CD14-positive monocyte (primary cell): ENCODE measurements at regions of chr11 and their contacts with region 1.

Region 1: DNA sequence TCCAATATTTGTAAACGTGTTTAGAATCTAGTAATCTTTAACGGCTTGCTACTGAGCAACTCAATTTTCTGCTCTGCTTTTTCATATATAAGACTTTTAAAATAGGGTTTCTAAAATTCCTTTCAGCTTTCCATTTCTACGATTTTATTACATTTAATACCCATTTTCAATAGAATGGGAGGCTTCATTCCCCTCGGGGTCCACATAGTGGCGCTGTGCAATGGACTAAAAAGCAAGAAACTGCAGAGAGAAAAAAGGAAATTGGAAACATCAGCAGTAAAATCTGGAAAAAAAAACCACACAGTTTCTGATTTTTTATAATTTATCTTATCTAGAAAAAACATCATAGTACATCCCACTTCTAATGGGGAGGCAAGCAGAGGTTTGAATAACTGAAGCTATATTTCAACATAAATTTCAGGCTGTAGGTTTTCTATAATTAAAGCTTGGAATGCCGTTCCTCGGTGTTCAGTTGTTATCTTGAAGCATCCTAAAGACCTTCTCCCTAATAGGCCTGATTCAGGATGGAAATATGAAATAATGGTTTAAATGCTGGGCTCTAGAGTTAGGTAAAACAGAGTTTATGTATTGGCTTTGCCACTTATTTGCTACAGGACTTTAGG is 18.7 kb upstream of the JHY start:
- DNase-seq: peak; percentile 40 to 63 (median 60)
- H3K4me3 ChIP-seq: peak overlapping the region; percentile 44 to 96 (median 70)
- H3K4me3 Mint-ChIP-seq: peak overlapping the region; percentile 68 to 92
- H3K27ac ChIP-seq: peak overlapping the region in 1 of 2 donors; percentile 91
- H3K27ac Mint-ChIP-seq: peak overlapping the region; percentile 92 to 99 (median 97)
- H3K4me1 ChIP-seq: peaks cover 15 to 23% of the 10 kb centered on the region in 2 donors
- H3K4me1 Mint-ChIP-seq: peaks cover 21% of the 10 kb centered on the region
- H3K27me3 ChIP-seq: peaks cover 0 to 2% of the 10 kb centered on the region in 2 donors
- H3K27me3 Mint-ChIP-seq: peaks cover 6 to 9% (median 6%) of the 10 kb centered on the region in 3 donors
- CTCF ChIP-seq: peak; percentile 92

Region 2: DNA sequence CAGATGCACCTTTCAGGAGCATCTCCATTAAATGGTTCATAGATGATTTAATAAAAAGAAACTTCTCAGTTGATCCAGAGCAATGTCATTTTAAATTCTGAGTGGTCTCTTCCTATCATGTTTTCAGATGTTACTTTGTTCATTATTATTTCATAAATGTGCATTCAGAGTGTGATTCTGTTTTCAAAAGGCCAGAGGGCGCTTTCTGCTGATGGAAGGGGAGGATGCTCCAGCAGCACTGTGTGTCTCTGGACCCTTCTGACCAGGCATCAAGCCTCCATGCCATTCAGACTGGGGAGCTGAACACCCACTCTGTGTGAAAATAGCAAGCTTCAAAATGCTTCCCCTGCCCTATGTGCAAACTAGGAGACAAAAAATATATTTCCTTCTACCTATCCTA is 49.4 kb before region 1 on chr11:
- intact Hi-C with region 1: no loop called
- DNase-seq: no peak
- H3K4me3 ChIP-seq: no peak overlapping the region
- H3K4me3 Mint-ChIP-seq: no peak overlapping the region
- H3K27ac ChIP-seq: no peak overlapping the region
- H3K27ac Mint-ChIP-seq: no peak overlapping the region
- H3K4me1 ChIP-seq: no peaks in the 10 kb centered on the region
- H3K4me1 Mint-ChIP-seq: peaks cover 4% of the 10 kb centered on the region
- H3K27me3 ChIP-seq: no peaks in the 10 kb centered on the region
- H3K27me3 Mint-ChIP-seq: peaks cover 0 to 1% (median 0%) of the 10 kb centered on the region in 3 donors
- CTCF ChIP-seq: no peak

Region 3: GRCh38 chr11:122832721-122833470 is 30.9 kb before region 1 on chr11:
- intact Hi-C with region 1: no loop called
- DNase-seq: peak in 2 of 3 donors; percentile 21 to 34
- H3K4me3 ChIP-seq: no peak overlapping the region
- H3K4me3 Mint-ChIP-seq: peak overlapping the region; percentile 64 to 75
- H3K27ac ChIP-seq: no peak overlapping the region
- H3K27ac Mint-ChIP-seq: no peak overlapping the region
- H3K4me1 ChIP-seq: peaks cover 29 to 39% of the 10 kb centered on the region in 2 donors
- H3K4me1 Mint-ChIP-seq: peaks cover 47% of the 10 kb centered on the region
- H3K27me3 ChIP-seq: peaks cover 0 to 2% of the 10 kb centered on the region in 2 donors
- H3K27me3 Mint-ChIP-seq: peaks cover 13 to 20% (median 14%) of the 10 kb centered on the region in 3 donors
- CTCF ChIP-seq: no peak

Region 4: GRCh38 chr11:123020968-123021367 is 157.2 kb after region 1 on chr11:
- intact Hi-C with region 1: loop called (anchors 2 to 5 kb)
- DNase-seq: peak; percentile 49 to 69 (median 64)
- H3K4me3 ChIP-seq: no peak overlapping the region
- H3K4me3 Mint-ChIP-seq: no peak overlapping the region
- H3K27ac ChIP-seq: no peak overlapping the region
- H3K27ac Mint-ChIP-seq: no peak overlapping the region
- H3K4me1 ChIP-seq: peaks cover 5 to 13% of the 10 kb centered on the region in 2 donors
- H3K4me1 Mint-ChIP-seq: peaks cover 9% of the 10 kb centered on the region
- H3K27me3 ChIP-seq: no peaks in the 10 kb centered on the region
- H3K27me3 Mint-ChIP-seq: peaks cover 4 to 7% (median 5%) of the 10 kb centered on the region in 3 donors
- CTCF ChIP-seq: peak; percentile 71

Region 5: GRCh38 chr11:123062158-123062891 is 198.5 kb after region 1 on chr11:
- intact Hi-C with region 1: loop called in 1 of 2 experiments (anchors 5 kb)
- DNase-seq: peak; percentile 97 to 98 (median 98)
- H3K4me3 ChIP-seq: peak overlapping the region; percentile 55 to 98 (median 96)
- H3K4me3 Mint-ChIP-seq: peak overlapping the region; percentile 94
- H3K27ac ChIP-seq: peak overlapping the region; percentile 99 to 100
- H3K27ac Mint-ChIP-seq: peak overlapping the region; percentile 96 to 100 (median 99)
- H3K4me1 ChIP-seq: peaks cover 42 to 74% of the 10 kb centered on the region in 2 donors
- H3K4me1 Mint-ChIP-seq: peaks cover 62% of the 10 kb centered on the region
- H3K27me3 ChIP-seq: no peaks in the 10 kb centered on the region
- H3K27me3 Mint-ChIP-seq: no peaks in the 10 kb centered on the region
- CTCF ChIP-seq: no peak